ENCODE measurements at regions of chr22 and their contacts with region 1.

Region 1: GRCh38 chr22:36239401-36240171 is at the start of gene APOL2:
- DNase-seq: peak; percentile 89
- CTCF ChIP-seq: peak; percentile 77

Region 2: GRCh38 chr22:36227386-36227785 is 12.2 kb before region 1 on chr22:
- CTCF ChIA-PET with region 1: interaction called, 11 read pairs
- POLR2A ChIA-PET with region 1: interaction called, 3 read pairs
- DNase-seq: no peak
- CTCF ChIP-seq: no peak

Region 3: DNA sequence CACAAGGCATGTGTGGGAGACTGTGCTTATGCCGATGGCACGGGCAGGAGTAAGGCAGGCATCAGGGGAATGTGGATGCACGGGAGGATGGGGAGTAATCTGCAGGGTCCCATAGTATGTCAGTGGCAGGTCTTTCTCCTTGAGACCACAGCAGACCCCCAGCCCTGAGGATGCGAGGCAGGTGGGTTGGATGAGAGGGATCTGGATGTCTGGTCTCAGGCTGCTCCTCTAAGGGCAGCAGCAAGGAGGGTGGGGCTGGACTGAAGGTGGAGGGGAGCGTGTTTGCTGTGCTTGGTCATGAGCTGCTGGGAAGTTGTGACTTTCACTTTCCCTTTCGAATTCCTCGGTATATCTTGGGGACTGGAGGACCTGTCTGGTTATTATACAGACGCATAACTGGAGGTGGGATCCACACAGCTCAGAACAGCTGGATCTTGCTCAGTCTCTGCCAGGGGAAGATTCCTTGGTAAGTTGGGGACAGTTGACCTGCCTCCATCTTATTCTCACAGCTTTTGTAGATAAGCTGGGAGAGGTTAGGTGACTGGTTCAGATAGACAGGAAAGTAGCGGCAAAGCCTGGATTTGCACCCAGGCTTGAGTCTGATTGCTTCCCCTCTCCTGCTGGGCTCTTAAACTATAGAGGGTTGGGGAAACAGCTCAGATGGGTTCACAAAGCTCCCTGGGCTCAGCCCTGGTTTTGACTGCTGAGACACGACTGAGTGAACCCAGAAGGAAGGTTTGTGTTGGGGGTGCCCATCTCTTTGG is 13.3 kb after region 1 on chr22 and contains the start of gene APOL1:
- CTCF ChIA-PET with region 1: interaction called, 46 read pairs
- POLR2A ChIA-PET with region 1: interaction called, 6 read pairs
- DNase-seq: peak; percentile 66
- CTCF ChIP-seq: no peak

Measured in GM10248 (cell line).